Dorsolateral prefrontal cortex (tissue), 120 donors: ENCODE measurements at regions of chr20 and their contacts with region 1.

Region 1: DNA sequence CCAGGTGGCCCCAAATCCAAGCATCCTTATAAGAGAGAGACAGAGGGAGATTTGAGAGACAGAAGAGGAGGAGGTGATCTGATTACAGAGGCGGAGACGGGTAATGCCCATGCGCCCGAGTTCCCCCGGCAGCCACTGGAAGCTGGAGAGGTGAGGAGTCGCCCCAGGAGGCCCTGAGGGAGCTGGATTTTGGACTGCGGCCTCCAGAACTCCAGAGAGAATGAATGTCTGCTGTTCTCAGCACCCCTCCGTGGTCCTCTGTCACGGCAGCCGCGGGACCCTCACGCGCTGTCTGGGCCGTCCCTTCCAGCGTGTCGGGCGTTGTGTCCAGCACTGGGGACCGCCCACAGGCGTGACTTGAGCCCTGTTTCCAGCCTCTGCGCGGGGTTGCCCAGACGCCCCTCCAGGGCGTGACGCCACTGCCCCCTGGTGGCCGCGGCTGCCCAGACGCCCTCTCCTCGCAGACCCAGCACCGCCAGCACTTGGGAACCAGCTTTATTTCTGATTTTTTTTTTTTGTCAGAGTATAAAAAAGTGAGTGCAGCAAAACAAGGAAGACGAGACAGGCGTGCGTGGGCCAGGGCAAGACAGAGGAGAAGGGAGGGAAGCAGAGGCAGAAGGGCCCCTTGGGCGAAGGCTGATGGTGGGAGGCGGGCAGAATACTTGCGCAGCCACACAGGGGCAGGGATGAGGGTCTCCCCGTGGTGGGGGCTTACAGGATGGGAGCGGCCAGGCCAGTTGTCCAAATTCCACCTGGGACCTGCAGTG is 4.1 kb upstream of the ZNF512B start:
- DNase-seq: peak; percentile 67 to 92 (median 86)
- H3K4me3 ChIP-seq: peak overlapping the region in 55 of 59 donors; percentile 7 to 63 (median 38)
- H3K27ac ChIP-seq: peak overlapping the region in 53 of 59 donors; percentile 6 to 88 (median 61)
- H3K27me3 ChIP-seq: peaks cover 0 to 13% (median 0%) of the 10 kb centered on the region in 45 donors
- CTCF ChIP-seq: peak; percentile 90 to 100 (median 98)

Region 2: DNA sequence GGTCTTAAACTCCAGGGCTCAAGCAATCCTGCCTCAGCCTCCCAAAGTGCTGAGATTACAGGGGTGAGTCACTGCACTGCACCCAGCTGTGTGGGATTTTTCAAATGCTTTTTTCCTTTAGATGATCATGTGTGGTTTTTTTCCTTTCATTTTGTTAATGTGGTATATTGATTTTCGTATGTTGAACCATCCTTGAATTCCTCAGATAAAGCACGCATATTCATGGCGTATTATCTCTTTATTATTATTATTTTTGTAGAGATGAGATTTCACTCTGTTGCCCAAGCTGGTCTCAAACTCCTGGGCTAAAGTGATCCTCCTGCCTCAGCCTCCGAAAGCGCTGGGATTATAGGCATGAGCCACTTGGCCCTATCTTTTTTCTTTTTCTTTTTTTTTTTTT is 259.0 kb before region 1 on chr20:
- intact Hi-C with region 1: no loop called
- DNase-seq: peak in 1 of 10 donors; percentile 5
- H3K4me3 ChIP-seq: no peak overlapping the region
- H3K27ac ChIP-seq: no peak overlapping the region
- H3K27me3 ChIP-seq: no peaks in the 10 kb centered on the region
- CTCF ChIP-seq: no peak

Region 3: GRCh38 chr20:63775096-63775978 is 198.5 kb before region 1 on chr20:
- intact Hi-C with region 1: loop called in 1 of 2 experiments (anchors 10 kb)
- DNase-seq: peak in 9 of 10 donors; percentile 40 to 78 (median 68)
- H3K4me3 ChIP-seq: peak overlapping the region in 57 of 59 donors; percentile 7 to 61 (median 46)
- H3K27ac ChIP-seq: peak overlapping the region in 14 of 59 donors; percentile 20 to 78 (median 42)
- H3K27me3 ChIP-seq: no peaks in the 10 kb centered on the region
- CTCF ChIP-seq: peak; percentile 28 to 81 (median 70)

Region 4: DNA sequence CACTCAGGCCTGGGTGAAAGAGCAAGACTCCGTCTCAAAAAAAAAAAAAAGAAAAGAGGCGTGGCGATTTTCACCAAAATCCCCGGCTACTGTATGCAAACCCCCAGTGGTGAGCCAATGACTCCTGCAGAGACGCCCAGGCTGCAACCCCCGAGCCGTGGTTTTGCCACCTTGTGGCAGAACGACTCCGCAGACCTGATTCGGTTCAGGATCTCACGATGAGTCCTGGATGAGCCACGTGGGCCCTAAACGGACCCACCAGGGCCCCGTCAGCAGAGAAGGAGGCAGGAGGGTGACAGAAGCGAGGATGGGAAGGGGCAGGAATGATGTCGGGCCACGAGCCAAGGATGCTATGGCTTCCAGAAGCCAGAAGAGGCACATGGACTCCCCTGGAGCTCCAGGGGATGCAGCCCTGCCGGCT is 191.8 kb before region 1 on chr20:
- intact Hi-C with region 1: loop called (anchors 5 to 10 kb)
- DNase-seq: no peak
- H3K4me3 ChIP-seq: no peak overlapping the region
- H3K27ac ChIP-seq: peak overlapping the region in 9 of 59 donors; percentile 5 to 84 (median 30)
- H3K27me3 ChIP-seq: no peaks in the 10 kb centered on the region
- CTCF ChIP-seq: peak in 2 of 56 donors; percentile 18 to 22

Region 5: GRCh38 chr20:63911176-63911575 is 62.6 kb before region 1 on chr20:
- intact Hi-C with region 1: loop called (anchors 2 kb)
- DNase-seq: peak in 7 of 10 donors; percentile 24 to 66 (median 49)
- H3K4me3 ChIP-seq: peak overlapping the region in 4 of 59 donors; percentile 5 to 32 (median 17)
- H3K27ac ChIP-seq: peak overlapping the region in 46 of 59 donors; percentile 2 to 80 (median 52)
- H3K27me3 ChIP-seq: no peaks in the 10 kb centered on the region
- CTCF ChIP-seq: peak in 1 of 56 donors; percentile 7